ENCODE measurements at regions of chr2 and their contacts with region 1.

Region 1: GRCh38 chr2:43075054-43075593 is 151.3 kb downstream of the ZFP36L2 start:
- DNase-seq: peak; percentile 71 to 95
- H3K4me3 ChIP-seq: no peak overlapping the region
- H3K27ac ChIP-seq: peak overlapping the region; percentile 90 to 99
- H3K4me1 ChIP-seq: peaks cover 28 to 63% of the 10 kb centered on the region in 2 donors
- H3K27me3 ChIP-seq: no peaks in the 10 kb centered on the region
- CTCF ChIP-seq: peak in 2 of 3 experiments; percentile 12 to 25

Region 2: GRCh38 chr2:43047190-43047780 is 27.8 kb before region 1 on chr2:
- intact Hi-C with region 1: loop called (anchors 2 kb)
- DNase-seq: no peak
- H3K4me3 ChIP-seq: no peak overlapping the region
- H3K27ac ChIP-seq: peak overlapping the region; percentile 81 to 87
- H3K4me1 ChIP-seq: peaks cover 4 to 28% of the 10 kb centered on the region in 2 donors
- H3K27me3 ChIP-seq: no peaks in the 10 kb centered on the region
- CTCF ChIP-seq: no peak

Region 3: GRCh38 chr2:43158259-43158880 is 83.2 kb after region 1 on chr2:
- intact Hi-C with region 1: loop called (anchors 1 kb)
- DNase-seq: peak; percentile 82 to 94
- H3K4me3 ChIP-seq: peak overlapping the region in 1 of 2 donors; percentile 5
- H3K27ac ChIP-seq: peak overlapping the region; percentile 93 to 95
- H3K4me1 ChIP-seq: peaks cover 22 to 31% of the 10 kb centered on the region in 2 donors
- H3K27me3 ChIP-seq: no peaks in the 10 kb centered on the region
- CTCF ChIP-seq: no peak

Measured in ascending aorta (tissue), 2 donors.